CD4-positive, alpha-beta T cell (primary cell): ENCODE measurements at regions of chr2 and their contacts with region 1.

Region 1: DNA sequence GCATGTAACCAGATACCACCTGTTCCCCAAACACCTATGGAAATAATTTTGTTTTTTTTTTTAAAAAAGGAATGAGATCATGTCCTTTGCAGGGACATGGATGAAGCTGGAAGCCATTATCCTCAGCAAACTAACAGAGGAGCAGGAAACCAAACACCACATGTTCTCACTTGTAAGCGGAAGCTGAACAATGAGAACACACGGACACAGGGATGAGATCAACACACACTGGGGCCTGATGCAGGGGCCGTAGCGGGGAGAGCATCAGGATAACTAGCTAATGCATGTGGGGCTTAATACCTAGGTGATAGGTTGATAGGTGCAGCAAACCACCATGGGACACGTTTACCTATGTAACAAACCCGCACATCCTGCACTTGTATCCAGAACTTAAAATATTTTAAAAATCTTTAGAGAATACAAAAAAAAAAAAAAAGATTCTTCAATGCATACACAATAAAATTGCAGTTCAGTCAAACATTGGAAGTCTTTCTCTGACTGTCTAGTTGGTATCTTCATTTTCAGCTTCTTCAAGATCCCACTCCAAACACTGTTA is 11.6 kb upstream of the CASP10 start:
- DNase-seq: no peak
- ATAC-seq: no peak
- H3K4me3 ChIP-seq: no peak overlapping the region
- H3K4me3 Mint-ChIP-seq: no peak overlapping the region
- H3K27ac ChIP-seq: no peak overlapping the region
- H3K27ac Mint-ChIP-seq: peak overlapping the region; percentile 51
- H3K4me1 ChIP-seq: no peaks in the 10 kb centered on the region
- H3K4me1 Mint-ChIP-seq: no peaks in the 10 kb centered on the region
- H3K27me3 ChIP-seq: no peaks in the 10 kb centered on the region
- H3K27me3 Mint-ChIP-seq: no peaks in the 10 kb centered on the region
- CTCF ChIP-seq: no peak

Region 2: DNA sequence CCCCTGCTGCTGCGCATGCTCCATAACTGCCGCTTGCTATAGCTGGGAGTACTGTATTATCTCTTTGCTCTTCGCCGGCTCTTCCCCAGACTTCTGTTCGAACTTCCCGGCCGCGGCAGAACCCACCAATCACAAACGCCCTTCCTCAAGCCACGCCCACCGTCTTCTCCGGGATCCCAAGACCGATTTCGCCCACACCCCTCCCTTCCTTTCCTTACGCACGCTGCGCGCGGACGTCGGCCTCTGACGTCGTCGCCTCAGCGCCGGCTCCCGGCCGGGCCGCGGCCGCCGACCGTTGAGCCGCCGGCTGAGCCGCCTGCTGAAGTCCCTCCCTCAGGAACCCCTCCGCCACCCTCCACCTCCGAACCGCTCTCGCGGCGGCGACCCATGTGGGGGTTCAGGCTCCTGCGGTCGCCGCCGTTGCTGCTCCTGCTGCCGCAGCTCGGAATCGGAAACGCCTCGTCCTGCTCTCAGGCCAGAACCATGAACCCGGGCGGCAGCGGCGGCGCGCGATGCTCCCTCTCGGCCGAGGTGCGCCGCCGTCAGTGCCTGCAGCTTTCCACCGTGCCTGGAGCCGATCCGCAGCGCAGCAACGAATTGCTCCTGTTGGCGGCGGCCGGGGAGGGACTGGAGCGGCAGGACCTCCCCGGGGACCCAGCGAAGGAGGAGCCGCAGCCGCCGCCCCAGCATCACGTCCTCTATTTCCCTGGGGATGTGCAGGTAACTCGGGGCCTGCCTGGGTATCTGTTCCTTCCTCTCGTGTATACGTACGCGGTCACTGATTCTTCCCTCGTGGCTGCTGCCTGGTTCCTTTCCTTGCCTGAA is 1260.1 kb before region 1 on chr2 and contains the start of gene C2orf69:
- CTCF ChIA-PET with region 1: no interaction called
- POLR2A ChIA-PET with region 1: no interaction called
- intact Hi-C with region 1: no loop called
- DNase-seq: peak; percentile 78 to 97 (median 88)
- ATAC-seq: peak; percentile 79
- H3K4me3 ChIP-seq: peak within 1 kb of the TSS; percentile 78
- H3K4me3 Mint-ChIP-seq: peak within 1 kb of the TSS; percentile 99
- H3K27ac ChIP-seq: peak within 1 kb of the TSS; percentile 67 to 80
- H3K27ac Mint-ChIP-seq: peak within 1 kb of the TSS; percentile 95
- H3K4me1 ChIP-seq: peaks cover 17% of the 10 kb centered on the region
- H3K4me1 Mint-ChIP-seq: peaks cover 40% of the 10 kb centered on the region
- H3K27me3 ChIP-seq: no peaks in the 10 kb centered on the region
- H3K27me3 Mint-ChIP-seq: no peaks in the 10 kb centered on the region
- CTCF ChIP-seq: no peak
- total RNA-seq, gene C2orf69: 12.5 to 13.7 TPM

Region 3: DNA sequence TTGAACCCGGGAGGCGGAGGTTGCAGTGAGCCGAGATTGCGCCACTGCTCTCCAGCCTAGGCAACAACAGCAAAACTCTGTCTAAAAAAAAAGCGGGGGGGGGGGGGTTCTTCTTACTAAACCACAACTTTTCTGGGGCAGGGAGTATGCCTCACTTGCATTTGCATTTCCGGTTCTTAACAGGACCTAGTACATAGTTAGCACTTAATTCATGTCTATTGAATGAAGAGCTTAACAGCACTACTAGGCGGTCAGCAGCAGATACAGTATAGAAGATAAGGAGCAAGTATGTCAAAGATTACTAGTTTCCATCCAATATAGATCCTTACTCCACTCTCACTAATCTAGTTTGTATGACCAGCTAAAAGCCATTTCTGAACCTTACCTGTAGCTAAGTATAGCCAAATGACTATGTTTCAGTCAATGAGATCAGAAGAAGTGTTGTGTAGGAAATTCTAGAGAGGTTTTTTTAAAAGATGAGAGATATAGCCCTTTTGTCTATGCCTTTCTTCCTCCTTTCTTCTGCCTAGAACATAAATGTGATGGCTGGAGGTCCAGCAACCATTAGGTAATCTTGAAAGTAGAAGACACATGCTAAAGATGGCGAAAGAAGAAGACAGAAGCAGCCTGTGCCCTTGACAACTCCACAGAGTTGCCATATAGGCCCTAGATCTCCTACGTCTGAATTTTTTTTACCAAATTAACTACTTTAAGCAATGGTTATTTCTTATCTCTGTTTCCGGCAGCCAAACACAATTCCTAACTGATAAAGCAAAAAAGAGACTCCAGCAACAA is 111.2 kb before region 1 on chr2:
- CTCF ChIA-PET with region 1: no interaction called
- POLR2A ChIA-PET with region 1: no interaction called
- intact Hi-C with region 1: loop called in 1 of 2 experiments (anchors 5 kb)
- DNase-seq: peak in 2 of 14 experiments; percentile 15 to 44
- ATAC-seq: peak; percentile 29
- H3K4me3 ChIP-seq: no peak overlapping the region
- H3K4me3 Mint-ChIP-seq: no peak overlapping the region
- H3K27ac ChIP-seq: no peak overlapping the region
- H3K27ac Mint-ChIP-seq: peak overlapping the region; percentile 32
- H3K4me1 ChIP-seq: peaks cover 9% of the 10 kb centered on the region
- H3K4me1 Mint-ChIP-seq: peaks cover 57% of the 10 kb centered on the region
- H3K27me3 ChIP-seq: no peaks in the 10 kb centered on the region
- H3K27me3 Mint-ChIP-seq: no peaks in the 10 kb centered on the region
- CTCF ChIP-seq: no peak

Region 4: GRCh38 chr2:201071479-201072200 is 99.7 kb before region 1 on chr2 and contains the starts of genes HYCC2 and NDUFB3:
- CTCF ChIA-PET with region 1: interaction called, 6 read pairs
- POLR2A ChIA-PET with region 1: interaction called, 3 read pairs
- intact Hi-C with region 1: loop called (anchors 5 kb)
- DNase-seq: peak; percentile 85 to 98 (median 90)
- ATAC-seq: peak; percentile 92
- H3K4me3 ChIP-seq: peak within 1 kb of the TSS; percentile 87
- H3K4me3 Mint-ChIP-seq: peak within 1 kb of the TSS; percentile 99
- H3K27ac ChIP-seq: peak within 1 kb of the TSS; percentile 84 to 93
- H3K27ac Mint-ChIP-seq: peak within 1 kb of the TSS; percentile 97
- H3K4me1 ChIP-seq: peaks cover 18% of the 10 kb centered on the region
- H3K4me1 Mint-ChIP-seq: peaks cover 50% of the 10 kb centered on the region
- H3K27me3 ChIP-seq: no peaks in the 10 kb centered on the region
- H3K27me3 Mint-ChIP-seq: no peaks in the 10 kb centered on the region
- CTCF ChIP-seq: peak; percentile 39
- total RNA-seq, gene HYCC2: 29.2 to 30.7 TPM
- total RNA-seq, gene NDUFB3: 10.1 to 13.6 TPM